ENCODE measurements at regions of chr4 and their contacts with region 1.

Region 1: DNA sequence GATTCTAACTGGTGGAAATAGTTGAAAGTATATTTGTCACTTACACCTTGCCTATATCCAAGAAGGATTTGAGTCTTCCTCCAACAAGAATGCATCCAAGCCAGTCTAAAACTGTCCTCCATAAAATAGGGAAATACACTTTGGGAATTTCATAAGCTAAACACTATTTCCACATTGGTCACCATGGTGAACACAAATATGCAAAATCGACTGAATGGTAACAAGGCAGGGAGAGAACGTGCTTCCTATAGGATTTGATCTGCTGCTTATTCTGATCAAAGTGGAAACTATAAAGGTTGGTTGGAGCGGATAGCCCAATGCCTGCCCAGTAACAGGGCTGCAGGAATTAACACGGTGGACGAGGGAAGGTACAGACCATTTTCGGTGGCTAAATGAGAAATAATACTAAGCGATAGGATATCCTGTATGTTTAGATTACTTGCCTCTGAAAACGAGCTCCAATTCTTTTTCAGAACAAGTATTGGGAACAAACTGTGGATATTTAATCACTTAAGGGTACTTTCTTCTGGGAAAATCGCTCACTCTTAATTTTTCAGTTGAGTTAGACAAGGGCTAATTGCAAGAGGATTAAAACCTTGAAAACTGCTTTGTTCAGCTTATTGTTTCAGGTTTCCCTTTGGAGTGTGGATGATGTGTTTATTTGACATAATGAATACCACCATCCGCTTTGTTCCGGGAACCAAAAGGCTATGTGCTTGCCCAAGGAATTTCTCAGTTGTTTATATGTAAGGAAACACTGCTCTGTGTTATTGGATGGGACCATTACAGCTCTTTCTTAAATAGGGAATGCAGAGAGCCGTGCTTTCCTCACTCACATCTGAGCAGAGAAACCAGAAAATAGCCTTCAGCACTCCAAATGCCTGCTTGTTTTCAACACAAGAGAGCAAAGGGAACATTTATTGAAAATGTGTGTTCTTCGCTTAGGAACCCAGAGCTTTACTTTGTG is 194.4 kb downstream of the CBR4 start:
- DNase-seq: no peak
- H3K4me3 Mint-ChIP-seq: no peak overlapping the region
- H3K27ac Mint-ChIP-seq: peak overlapping the region; percentile 70
- H3K4me1 Mint-ChIP-seq: peaks cover 29% of the 10 kb centered on the region
- H3K27me3 Mint-ChIP-seq: no peaks in the 10 kb centered on the region
- CTCF ChIP-seq: no peak

Region 2: DNA sequence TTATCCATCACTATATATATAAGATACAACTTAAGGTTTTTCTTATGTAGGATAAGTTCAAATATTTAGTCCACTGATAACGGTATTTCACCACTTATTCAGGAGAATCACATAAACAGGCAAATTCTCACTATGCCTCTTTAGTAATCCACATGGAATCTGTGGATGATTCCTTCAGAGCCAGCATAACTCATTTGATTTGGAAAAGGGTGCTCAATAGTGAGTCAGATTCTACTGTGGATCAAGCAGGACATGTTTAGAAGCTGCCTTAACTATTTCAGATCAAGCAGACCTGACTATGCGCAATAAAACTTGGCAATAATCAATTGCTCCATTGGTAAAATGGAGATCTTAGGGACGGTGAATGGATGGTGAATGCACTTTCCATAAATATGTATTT is 10.3 kb after region 1 on chr4:
- CTCF ChIA-PET with region 1: interaction called, 36 read pairs
- POLR2A ChIA-PET with region 1: interaction called, 265 read pairs
- intact Hi-C with region 1: loop called (anchors 1 kb)
- DNase-seq: no peak
- H3K4me3 Mint-ChIP-seq: no peak overlapping the region
- H3K27ac Mint-ChIP-seq: no peak overlapping the region
- H3K4me1 Mint-ChIP-seq: peaks cover 2% of the 10 kb centered on the region
- H3K27me3 Mint-ChIP-seq: no peaks in the 10 kb centered on the region
- CTCF ChIP-seq: no peak

Region 3: GRCh38 chr4:168841000-168841671 is 25.5 kb after region 1 on chr4:
- CTCF ChIA-PET with region 1: interaction called, 4 read pairs
- POLR2A ChIA-PET with region 1: interaction called, 18 read pairs
- intact Hi-C with region 1: no loop called
- DNase-seq: peak; percentile 31
- H3K4me3 Mint-ChIP-seq: no peak overlapping the region
- H3K27ac Mint-ChIP-seq: no peak overlapping the region
- H3K4me1 Mint-ChIP-seq: peaks cover 61% of the 10 kb centered on the region
- H3K27me3 Mint-ChIP-seq: no peaks in the 10 kb centered on the region
- CTCF ChIP-seq: no peak

Region 4: GRCh38 chr4:168847771-168848511 is 32.3 kb after region 1 on chr4:
- CTCF ChIA-PET with region 1: interaction called, 4 read pairs
- POLR2A ChIA-PET with region 1: interaction called, 18 read pairs
- intact Hi-C with region 1: no loop called
- DNase-seq: peak; percentile 57
- H3K4me3 Mint-ChIP-seq: peak overlapping the region; percentile 65
- H3K27ac Mint-ChIP-seq: peak overlapping the region; percentile 93
- H3K4me1 Mint-ChIP-seq: peaks cover 38% of the 10 kb centered on the region
- H3K27me3 Mint-ChIP-seq: no peaks in the 10 kb centered on the region
- CTCF ChIP-seq: no peak

Measured in MCF 10A (cell line).